AG04449 (cell line): ENCODE measurements at regions of chr15 and their contacts with region 1.

Region 1: GRCh38 chr15:41774062-41774881 is at the start of gene MAPKBP1:
- DNase-seq: peak; percentile 93
- H3K4me3 ChIP-seq: peak within 1 kb of the TSS; percentile 90
- CTCF ChIP-seq: peak; percentile 99

Region 2: DNA sequence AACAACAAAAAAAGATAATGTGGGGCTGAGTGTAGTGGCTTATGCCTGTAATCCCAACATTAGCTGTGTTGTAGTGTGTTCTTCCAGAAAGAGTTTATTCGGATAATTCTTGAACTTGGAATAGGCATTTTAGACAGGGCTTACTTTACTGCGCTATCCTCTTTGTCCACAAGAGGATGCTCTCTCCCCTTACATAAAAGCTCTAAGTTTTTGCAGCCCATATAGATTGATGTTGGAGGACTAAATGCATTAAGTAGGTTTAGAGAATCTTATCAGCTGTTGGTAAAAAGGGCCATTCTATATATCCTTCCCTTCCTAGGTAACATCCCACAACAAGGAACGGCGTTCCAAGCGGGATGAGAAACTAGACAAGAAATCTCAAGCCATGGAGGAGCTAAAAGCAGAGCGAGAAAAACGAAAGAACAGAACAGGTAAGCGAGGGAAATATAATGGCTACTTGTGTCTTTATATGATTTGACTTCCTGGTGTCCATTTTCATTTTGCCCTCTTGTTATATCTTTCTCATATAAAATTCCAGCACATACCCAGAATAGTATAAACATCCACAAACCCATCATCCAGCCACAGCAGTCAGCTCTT is 308.4 kb before region 1 on chr15:
- CTCF ChIA-PET with region 1: interaction called, 27 read pairs
- POLR2A ChIA-PET with region 1: no interaction called
- DNase-seq: peak; percentile 14
- H3K4me3 ChIP-seq: no peak overlapping the region
- CTCF ChIP-seq: peak; percentile 83

Region 3: DNA sequence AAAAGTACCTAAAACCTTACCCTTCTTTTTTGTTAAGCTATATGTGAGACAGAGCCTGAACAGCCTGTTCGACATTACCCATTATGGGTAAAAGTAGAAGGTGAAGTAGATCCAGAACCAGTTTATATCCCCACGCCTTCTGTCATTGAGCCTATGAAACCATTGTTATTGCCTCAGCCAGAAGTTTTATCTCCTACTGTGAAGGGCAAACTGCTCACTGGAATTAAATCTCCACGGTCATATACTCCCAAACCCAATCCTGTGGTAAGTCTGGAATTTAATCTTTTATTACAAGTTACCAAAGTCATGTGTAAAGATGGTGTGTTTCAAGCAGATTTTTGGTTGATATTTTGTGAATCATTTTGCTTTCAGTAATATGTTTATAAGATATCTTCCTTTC is 47.1 kb before region 1 on chr15:
- CTCF ChIA-PET with region 1: interaction called, 10 read pairs
- POLR2A ChIA-PET with region 1: no interaction called
- DNase-seq: peak; percentile 17
- H3K4me3 ChIP-seq: no peak overlapping the region
- CTCF ChIP-seq: no peak

Region 4: DNA sequence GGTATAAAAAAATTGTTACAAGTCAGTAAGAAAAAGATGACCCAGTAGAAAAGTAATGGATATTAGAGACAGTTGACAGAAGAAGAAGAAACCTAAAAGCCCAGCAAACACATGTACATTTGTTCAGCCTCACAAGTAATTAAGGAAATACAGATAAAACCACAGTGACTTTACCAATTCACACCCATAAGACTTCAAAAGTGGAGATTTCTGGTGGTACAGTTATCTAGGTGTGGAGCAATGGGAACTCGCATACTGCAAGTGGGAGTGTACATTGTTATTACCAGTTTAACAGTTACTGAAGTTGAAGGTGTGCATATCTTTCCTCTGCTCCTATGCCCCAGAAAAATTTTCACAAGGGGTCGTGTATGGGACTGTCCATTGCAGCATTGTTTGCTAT is 18.1 kb before region 1 on chr15:
- CTCF ChIA-PET with region 1: interaction called, 15 read pairs
- POLR2A ChIA-PET with region 1: no interaction called
- DNase-seq: no peak
- H3K4me3 ChIP-seq: no peak overlapping the region
- CTCF ChIP-seq: no peak

Region 5: GRCh38 chr15:41811432-41812195 is 37.3 kb after region 1 on chr15:
- CTCF ChIA-PET with region 1: interaction called, 756 read pairs
- POLR2A ChIA-PET with region 1: interaction called, 16 read pairs
- DNase-seq: peak; percentile 24
- H3K4me3 ChIP-seq: no peak overlapping the region
- CTCF ChIP-seq: peak; percentile 92

Region 6: GRCh38 chr15:41827880-41828806 is 53.9 kb after region 1 on chr15 and contains the start of gene JMJD7:
- CTCF ChIA-PET with region 1: interaction called, 24 read pairs
- POLR2A ChIA-PET with region 1: no interaction called
- DNase-seq: peak; percentile 17
- H3K4me3 ChIP-seq: peak within 1 kb of the TSS; percentile 93
- CTCF ChIP-seq: no peak